IMR-90 (cell line): ENCODE measurements at regions of chr6 and their contacts with region 1.

Region 1: DNA sequence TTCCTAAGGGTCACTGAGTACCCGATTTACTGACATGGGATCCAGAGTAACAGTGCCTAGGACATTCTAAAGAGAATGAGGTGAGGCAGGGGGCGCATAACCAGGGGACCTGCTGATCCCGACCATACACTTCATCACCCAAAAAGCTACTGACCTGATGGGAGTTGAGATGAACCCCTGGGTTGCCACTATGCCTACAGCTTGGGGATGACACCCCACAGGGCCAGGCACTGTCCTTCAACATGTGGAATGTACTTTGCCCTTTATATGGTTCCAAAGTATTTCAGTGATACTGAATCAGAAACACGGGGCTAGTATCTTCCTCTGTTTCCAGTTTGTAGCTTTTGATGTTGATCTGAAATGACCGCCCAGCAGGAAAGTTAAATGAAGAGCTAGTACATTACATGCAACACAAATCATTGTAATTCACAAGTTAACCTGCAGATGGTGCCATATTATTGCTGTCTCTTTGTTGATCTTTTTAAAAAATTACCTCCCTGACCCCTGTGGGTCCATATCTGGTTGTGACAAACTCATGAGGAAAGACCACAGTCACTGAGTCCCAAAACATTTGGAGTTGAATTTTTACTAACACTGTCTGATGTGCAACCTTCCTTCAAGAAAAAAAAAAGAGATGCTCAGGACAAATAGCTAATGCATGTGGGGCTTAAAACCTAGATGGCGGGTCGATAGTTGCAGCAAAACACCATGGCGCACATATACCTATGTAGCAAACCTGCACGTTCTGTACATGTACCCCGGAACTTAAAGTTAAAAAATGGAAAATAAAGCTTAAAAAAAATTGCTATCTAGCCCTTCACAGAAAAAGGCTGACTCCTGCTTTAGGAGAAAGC is 42.7 kb upstream of the GCNT2 start:
- DNase-seq: peak; percentile 42
- ATAC-seq: peak; percentile 72
- H3K4me3 ChIP-seq: no peak overlapping the region
- H3K27ac ChIP-seq: no peak overlapping the region
- H3K4me1 ChIP-seq: no peaks in the 10 kb centered on the region
- H3K27me3 ChIP-seq: no peaks in the 10 kb centered on the region
- CTCF ChIP-seq: peak; percentile 55
- POLR2A ChIP-seq: no peak
- RAD21 ChIP-seq: peak; percentile 60

Region 2: GRCh38 chr6:9455864-9456658 is 1022.4 kb before region 1 on chr6:
- CTCF ChIA-PET with region 1: no interaction called
- POLR2A ChIA-PET with region 1: no interaction called
- dilution Hi-C with region 1: no loop called
- in situ Hi-C with region 1: no loop called
- intact Hi-C with region 1: no loop called
- DNase-seq: no peak
- ATAC-seq: no peak
- H3K4me3 ChIP-seq: no peak overlapping the region
- H3K27ac ChIP-seq: no peak overlapping the region
- H3K4me1 ChIP-seq: 0 out of 2 replicates have a peak, but pooled peaks cover 2% of the 10 kb centered on the region
- H3K27me3 ChIP-seq: no peaks in the 10 kb centered on the region
- CTCF ChIP-seq: no peak
- POLR2A ChIP-seq: no peak
- RAD21 ChIP-seq: no peak

Region 3: GRCh38 chr6:10465629-10466504 is 12.5 kb before region 1 on chr6:
- CTCF ChIA-PET with region 1: interaction called, 15 read pairs
- POLR2A ChIA-PET with region 1: no interaction called
- dilution Hi-C with region 1: no loop called
- in situ Hi-C with region 1: no loop called
- intact Hi-C with region 1: no loop called
- DNase-seq: peak; percentile 28
- ATAC-seq: peak; percentile 63
- H3K4me3 ChIP-seq: no peak overlapping the region
- H3K27ac ChIP-seq: no peak overlapping the region
- H3K4me1 ChIP-seq: no peaks in the 10 kb centered on the region
- H3K27me3 ChIP-seq: no peaks in the 10 kb centered on the region; the same call in 1 of the 2 replicates
- CTCF ChIP-seq: peak; percentile 41
- POLR2A ChIP-seq: no peak
- RAD21 ChIP-seq: peak; percentile 24; the same call in 1 of the 2 replicates

Region 4: DNA sequence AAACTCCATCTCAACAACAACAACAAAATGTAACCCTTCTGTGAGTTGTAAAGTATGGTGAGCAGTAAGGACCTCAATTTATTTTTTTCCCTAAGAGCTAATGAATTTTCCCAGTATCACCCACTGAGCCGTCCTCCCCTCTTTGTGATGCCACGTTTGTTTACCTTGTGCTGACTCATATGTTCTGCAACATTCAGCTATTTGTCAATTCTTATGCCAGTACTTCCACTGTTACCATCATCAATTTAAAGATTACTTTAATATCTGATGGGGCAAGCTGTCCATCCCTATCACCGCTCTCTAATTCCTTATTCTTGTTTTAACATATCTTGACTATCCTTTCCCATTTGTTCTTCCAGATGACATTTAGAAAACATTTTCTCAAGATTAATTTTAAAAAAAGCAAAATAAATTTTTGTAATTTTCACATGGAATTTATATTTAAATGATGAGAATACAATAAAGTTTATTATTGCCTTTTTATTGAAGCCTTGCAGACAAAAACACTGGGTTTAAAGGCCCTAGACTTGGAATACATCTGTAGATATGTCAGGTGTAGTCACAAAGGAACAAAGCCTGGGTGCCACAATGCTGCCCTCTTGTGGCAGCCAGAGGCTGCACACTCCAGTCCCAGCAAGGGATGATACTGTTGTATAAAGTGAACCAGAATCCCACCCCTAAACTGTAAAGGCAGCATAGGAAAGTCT is 322.6 kb after region 1 on chr6:
- CTCF ChIA-PET with region 1: interaction called, 13 read pairs
- POLR2A ChIA-PET with region 1: no interaction called
- dilution Hi-C with region 1: no loop called
- in situ Hi-C with region 1: loop called (anchors 5 kb)
- intact Hi-C with region 1: loop called (anchors 1 kb)
- DNase-seq: peak; percentile 60
- ATAC-seq: peak; percentile 99
- H3K4me3 ChIP-seq: no peak overlapping the region
- H3K27ac ChIP-seq: no peak overlapping the region
- H3K4me1 ChIP-seq: no peaks in the 10 kb centered on the region
- H3K27me3 ChIP-seq: no peaks in the 10 kb centered on the region
- CTCF ChIP-seq: peak; percentile 93
- POLR2A ChIP-seq: no peak
- RAD21 ChIP-seq: peak; percentile 90

Region 5: GRCh38 chr6:11050731-11051130 is 572.3 kb after region 1 on chr6:
- CTCF ChIA-PET with region 1: no interaction called
- POLR2A ChIA-PET with region 1: no interaction called
- dilution Hi-C with region 1: no loop called
- in situ Hi-C with region 1: loop called (anchors 25 kb)
- intact Hi-C with region 1: no loop called
- DNase-seq: peak; percentile 72
- ATAC-seq: 0 out of 2 replicates have a peak, but pooled peaks have one; percentile 14
- H3K4me3 ChIP-seq: no peak overlapping the region
- H3K27ac ChIP-seq: no peak overlapping the region
- H3K4me1 ChIP-seq: peaks cover 5% of the 10 kb centered on the region
- H3K27me3 ChIP-seq: no peaks in the 10 kb centered on the region
- CTCF ChIP-seq: no peak
- POLR2A ChIP-seq: no peak
- RAD21 ChIP-seq: no peak

Region 6: GRCh38 chr6:11552442-11552841 is 1074.0 kb after region 1 on chr6:
- CTCF ChIA-PET with region 1: no interaction called
- POLR2A ChIA-PET with region 1: no interaction called
- dilution Hi-C with region 1: no loop called
- in situ Hi-C with region 1: loop called (anchors 25 kb)
- intact Hi-C with region 1: no loop called
- DNase-seq: no peak
- ATAC-seq: no peak
- H3K4me3 ChIP-seq: no peak overlapping the region
- H3K27ac ChIP-seq: no peak overlapping the region
- H3K4me1 ChIP-seq: no peaks in the 10 kb centered on the region
- H3K27me3 ChIP-seq: peaks cover 9% of the 10 kb centered on the region
- CTCF ChIP-seq: no peak
- POLR2A ChIP-seq: no peak
- RAD21 ChIP-seq: no peak

Region 7: DNA sequence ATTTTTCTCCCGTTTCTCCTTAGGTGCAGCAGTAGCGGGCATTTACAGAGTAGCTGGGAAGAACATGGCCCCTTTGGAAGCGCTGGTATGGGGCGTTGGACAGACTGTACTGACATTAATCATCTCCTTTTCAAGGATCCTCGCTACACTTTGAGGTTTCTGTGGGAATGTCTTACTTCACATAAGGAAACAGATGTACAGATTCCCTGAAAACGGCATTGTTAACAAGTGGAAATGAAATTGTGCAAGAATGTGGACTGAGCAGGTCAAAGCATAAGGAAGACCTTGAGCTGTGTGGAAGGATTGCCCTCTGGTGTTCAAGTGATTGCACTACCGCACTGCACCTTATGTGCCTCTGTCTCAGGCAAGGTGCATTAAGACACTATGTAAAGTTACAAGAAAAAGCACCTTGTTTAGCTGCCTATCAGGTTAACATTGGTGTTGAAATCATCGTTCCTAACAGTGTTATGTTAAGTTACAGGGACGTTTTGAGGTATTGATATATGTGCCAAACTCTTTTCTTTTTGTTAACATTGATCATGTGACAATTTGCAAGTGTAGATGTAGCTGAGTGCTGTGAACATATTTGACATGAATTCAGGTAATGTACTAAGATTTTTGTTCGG is 1097.1 kb after region 1 on chr6:
- CTCF ChIA-PET with region 1: no interaction called
- POLR2A ChIA-PET with region 1: no interaction called
- dilution Hi-C with region 1: no loop called
- in situ Hi-C with region 1: loop called (anchors 25 kb)
- intact Hi-C with region 1: loop called (anchors 10 kb)
- DNase-seq: peak; percentile 84
- ATAC-seq: peak; percentile 100
- H3K4me3 ChIP-seq: no peak overlapping the region
- H3K27ac ChIP-seq: no peak overlapping the region
- H3K4me1 ChIP-seq: no peaks in the 10 kb centered on the region
- H3K27me3 ChIP-seq: no peaks in the 10 kb centered on the region
- CTCF ChIP-seq: peak; percentile 90
- POLR2A ChIP-seq: no peak
- RAD21 ChIP-seq: peak; percentile 94